ENCODE measurements at regions of chr3 and their contacts with region 1.

Region 1: GRCh38 chr3:15815696-15816095 is 17.9 kb upstream of the ANKRD28 start:
- DNase-seq: peak; percentile 37
- H3K4me3 ChIP-seq: no peak overlapping the region
- CTCF ChIP-seq: no peak

Region 2: GRCh38 chr3:15601397-15602145 is 214.1 kb before region 1 on chr3 and contains the starts of genes BTD and HACL1:
- CTCF ChIA-PET with region 1: interaction called, 10 read pairs
- POLR2A ChIA-PET with region 1: no interaction called
- DNase-seq: peak; percentile 96
- H3K4me3 ChIP-seq: peak within 1 kb of the TSS; percentile 97
- CTCF ChIP-seq: peak; percentile 37

Region 3: DNA sequence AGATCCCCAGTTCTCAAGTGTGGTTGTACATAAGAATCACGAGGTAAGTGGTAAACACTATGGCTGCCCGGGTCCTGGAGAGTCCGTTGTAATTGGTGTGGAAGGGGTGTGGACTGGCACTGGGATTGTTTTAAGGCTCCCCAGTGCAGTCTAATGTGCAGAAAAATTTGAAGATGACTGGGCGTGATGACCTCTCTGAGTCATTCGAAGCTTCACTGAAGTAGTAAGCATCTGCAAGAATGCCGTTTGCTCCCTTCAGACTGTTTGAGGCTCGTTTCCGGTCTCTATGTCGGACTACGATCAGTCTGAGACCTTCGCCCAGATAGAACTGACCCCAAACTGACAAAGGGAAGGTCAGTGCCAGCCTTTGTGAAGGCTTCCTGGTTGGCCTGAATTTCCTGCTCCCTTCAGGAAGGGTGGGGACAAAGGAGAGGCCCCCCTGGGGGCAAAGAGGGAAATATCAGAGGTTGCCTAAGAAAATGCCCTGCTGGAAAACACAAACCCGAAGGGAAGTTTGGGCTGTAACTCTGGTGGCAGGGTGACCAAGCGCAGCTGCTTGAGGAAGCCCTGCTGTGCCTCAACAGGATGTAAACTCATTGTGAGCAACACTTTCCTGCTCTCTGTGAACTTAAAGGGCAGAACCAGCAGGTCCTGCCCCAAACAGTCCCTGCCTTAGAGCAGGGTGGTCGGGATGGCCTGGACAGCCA is 179.5 kb before region 1 on chr3:
- CTCF ChIA-PET with region 1: interaction called, 90 read pairs
- POLR2A ChIA-PET with region 1: no interaction called
- DNase-seq: peak; percentile 88
- H3K4me3 ChIP-seq: peak overlapping the region; percentile 19
- CTCF ChIP-seq: no peak

Region 4: GRCh38 chr3:15903164-15903563 is 87.5 kb after region 1 on chr3:
- CTCF ChIA-PET with region 1: no interaction called
- POLR2A ChIA-PET with region 1: no interaction called
- DNase-seq: no peak
- H3K4me3 ChIP-seq: no peak overlapping the region
- CTCF ChIP-seq: no peak

Region 5: DNA sequence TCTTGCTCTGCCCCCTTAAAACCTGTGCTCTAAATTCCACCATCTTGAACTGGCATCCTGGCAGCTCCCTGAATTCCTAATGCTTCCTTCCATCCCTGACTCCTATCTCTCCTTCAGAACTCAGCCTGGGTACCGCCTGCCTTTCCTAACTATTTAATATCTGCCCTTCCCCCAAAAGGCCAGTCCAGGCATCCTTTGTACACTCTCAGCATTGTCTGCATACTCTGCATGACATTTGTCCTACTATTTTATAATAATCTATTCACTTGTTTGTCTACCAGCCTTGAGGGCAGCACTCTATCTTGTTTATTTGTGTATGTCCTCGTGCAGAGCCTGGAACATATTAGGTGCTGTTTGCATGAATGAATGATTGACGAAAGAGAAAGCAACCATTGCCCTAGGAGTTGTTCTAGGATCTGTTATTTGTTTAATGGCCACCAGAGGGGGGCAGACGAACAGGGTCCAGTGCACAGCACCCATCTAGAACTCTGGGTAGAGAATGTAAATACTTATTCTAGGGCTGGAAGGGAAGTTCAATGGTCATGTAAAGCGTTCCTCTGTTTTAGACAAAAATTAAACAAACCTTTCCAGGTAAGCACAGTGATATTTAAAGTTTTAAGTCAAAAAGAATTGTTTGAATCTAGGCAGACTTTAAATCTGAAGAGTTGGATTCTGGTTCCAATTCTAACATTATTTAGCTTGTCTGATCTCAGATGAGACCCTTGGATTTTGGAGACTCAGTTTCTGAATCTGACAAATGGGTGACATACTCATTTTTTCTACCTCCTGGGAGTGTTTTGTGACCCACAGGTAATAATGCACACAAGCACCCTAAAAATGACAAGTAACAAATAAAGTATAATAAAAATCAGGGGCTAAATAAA is 233.0 kb after region 1 on chr3:
- CTCF ChIA-PET with region 1: interaction called, 27 read pairs
- POLR2A ChIA-PET with region 1: no interaction called
- DNase-seq: no peak
- H3K4me3 ChIP-seq: no peak overlapping the region
- CTCF ChIP-seq: peak; percentile 60

Region 6: DNA sequence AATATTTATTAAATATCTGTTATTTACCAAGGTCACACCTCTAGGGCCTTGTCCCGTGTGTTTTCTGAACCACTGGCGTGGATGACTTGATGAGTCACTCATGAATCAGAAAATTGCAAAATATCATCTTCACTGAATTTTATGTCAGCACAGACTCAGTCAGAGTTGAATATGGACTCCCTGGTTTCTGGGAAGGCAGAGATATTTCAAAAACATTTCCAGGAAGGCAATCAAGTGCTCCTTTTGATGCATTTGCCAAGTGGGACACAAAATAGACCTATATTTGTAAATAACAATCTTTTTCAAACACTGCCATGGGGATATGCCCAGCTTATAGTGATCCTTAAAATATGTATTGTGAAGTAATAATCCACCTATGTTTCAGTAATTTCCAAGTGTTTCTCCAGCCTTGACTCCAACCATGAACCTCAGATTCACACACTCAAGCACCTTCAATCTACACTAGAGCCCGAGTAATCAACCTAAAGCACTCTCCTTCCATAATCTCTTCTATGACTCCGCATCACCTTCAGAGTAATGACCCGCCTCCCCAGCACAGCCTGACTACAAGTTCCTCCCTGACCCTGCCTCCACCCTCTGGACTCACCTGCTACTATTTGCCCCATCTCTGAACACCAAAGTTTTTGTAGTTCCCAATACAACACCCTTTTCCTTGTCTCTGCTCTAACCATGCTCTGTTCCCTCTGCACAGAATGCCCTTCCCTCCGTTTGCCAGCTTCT is 424.8 kb after region 1 on chr3:
- CTCF ChIA-PET with region 1: interaction called, 32 read pairs
- POLR2A ChIA-PET with region 1: no interaction called
- DNase-seq: peak; percentile 34
- H3K4me3 ChIP-seq: no peak overlapping the region
- CTCF ChIP-seq: no peak

Region 7: DNA sequence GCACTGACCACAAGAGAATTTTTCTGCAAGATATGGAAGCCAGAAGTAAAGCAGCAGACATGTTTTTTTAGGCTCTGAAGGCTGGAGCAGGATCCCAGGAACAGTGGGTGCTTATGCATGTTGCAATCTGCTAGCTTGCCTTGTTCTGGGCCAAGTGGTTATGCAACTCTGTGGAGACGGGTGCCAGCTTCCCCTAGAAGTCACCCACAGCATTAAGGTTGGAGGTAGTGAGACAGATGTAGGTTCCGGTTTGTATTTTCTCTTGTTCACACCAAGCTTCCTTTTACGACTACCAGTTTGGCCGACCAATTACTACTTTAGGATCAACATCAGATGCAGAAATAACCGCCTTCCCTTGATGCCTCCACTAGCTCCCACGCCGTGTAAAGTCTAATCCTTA is 437.9 kb after region 1 on chr3:
- CTCF ChIA-PET with region 1: interaction called, 32 read pairs
- POLR2A ChIA-PET with region 1: no interaction called
- DNase-seq: no peak
- H3K4me3 ChIP-seq: no peak overlapping the region
- CTCF ChIP-seq: no peak

Measured in AG04449 (cell line).